ENCODE measurements at regions of chr11 and their contacts with region 1.

Region 1: DNA sequence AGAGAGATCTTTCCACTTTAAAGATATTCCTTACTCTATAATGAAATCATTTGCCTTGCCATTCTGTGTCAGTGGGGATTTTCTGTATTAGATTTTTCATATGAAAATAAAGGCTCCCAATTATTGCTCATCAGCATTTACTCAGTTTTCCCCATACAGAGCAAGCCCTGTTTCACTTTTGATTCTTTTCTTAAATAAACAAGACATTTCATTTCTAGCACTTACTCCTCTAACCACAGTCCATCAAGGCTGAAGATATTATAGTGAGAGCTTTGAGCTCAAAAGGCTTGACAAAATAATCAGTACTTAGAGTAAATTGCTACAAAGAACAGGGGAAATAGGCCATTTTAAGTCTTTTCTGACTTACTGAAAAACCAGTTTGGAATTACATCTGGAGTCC is 385.1 kb downstream of the LRRC4C start:
- DNase-seq: no peak
- H3K4me3 ChIP-seq: no peak overlapping the region
- CTCF ChIP-seq: no peak
- POLR2A ChIP-seq: no peak

Region 2: GRCh38 chr11:41053894-41054293 is 20.4 kb before region 1 on chr11:
- intact Hi-C with region 1: loop called (anchors 1 kb)
- DNase-seq: no peak
- H3K4me3 ChIP-seq: no peak overlapping the region
- CTCF ChIP-seq: no peak
- POLR2A ChIP-seq: no peak

Measured in lower leg skin (tissue), 4 donors.